AG04449 (cell line): ENCODE measurements at regions of chr11 and their contacts with region 1.

Region 1: GRCh38 chr11:124673333-124674167 is at the starts of genes SIAE and SPA17:
- DNase-seq: peak; percentile 67
- H3K4me3 ChIP-seq: peak within 1 kb of the TSS; percentile 79
- CTCF ChIP-seq: no peak

Region 2: DNA sequence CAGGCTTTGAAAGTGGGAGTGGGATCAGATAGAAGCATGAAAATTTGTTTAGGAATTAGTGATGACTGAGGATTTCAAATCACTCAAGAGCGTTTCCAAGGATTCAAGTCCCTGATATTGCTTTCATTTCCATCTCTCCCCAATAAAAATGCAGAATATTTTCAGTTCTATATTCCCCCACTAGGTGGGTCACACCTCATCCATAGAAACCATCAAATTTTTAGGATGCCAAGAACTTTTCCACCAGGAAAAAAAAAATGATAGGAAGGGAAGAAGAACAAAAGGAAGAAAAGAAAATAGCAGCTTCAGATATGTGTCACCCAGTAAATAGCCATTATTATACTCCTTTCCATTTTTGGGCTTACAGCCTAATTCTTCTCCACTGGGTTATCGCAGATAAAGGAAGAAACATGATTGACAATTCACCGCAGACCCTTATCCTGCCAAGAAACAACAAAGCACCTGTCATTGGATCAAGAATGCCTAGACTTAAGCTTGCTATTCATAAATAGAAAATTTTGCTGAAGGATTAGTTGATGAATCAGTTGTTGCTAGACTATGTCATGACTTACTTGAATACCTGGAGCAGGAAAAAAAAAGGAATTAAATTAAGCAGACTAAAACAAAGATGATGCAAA is 520.7 kb before region 1 on chr11:
- CTCF ChIA-PET with region 1: no interaction called
- POLR2A ChIA-PET with region 1: no interaction called
- DNase-seq: no peak
- H3K4me3 ChIP-seq: no peak overlapping the region
- CTCF ChIP-seq: no peak

Region 3: DNA sequence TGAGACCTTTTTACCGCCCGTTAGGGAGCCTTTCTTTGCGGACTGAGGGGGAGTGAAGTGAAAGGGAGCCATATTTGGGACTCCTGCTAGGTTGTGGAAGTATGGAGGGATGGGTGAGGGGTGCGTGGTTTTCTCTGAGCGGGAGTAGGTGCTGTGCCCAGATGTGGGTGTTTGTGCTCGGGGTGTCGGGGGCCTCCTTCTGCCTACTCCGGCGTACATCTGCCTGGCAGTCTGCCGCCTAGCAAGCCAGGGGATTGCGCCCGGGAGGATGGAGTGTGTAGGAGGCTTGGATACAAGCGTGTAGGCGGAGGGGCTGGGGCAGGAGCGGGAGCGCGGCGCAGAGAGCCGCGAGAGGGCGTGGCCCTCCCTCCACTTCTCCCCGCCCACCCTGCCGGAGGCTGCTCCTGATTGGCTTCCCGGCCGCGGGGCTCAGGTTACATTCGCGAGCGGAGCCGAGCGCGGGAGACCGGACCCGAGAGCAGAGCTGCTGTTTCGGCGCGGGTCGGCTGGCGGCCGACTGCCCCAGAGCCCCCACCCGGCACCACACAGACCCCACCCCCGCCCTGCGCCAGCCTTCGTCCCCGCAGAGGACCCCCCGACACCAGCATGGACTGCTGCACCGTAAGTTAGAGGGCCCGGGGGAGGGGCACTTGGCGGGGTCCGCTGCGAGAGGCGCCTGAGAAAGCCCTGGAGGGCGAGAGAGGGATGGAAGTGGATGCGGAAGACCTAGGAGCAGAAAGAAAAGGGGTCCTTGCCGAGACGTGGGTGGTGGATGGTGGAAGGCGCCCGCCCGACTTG is 66.1 kb after region 1 on chr11 and contains the start of gene NRGN:
- CTCF ChIA-PET with region 1: interaction called, 15 read pairs
- POLR2A ChIA-PET with region 1: no interaction called
- DNase-seq: no peak
- H3K4me3 ChIP-seq: peak within 1 kb of the TSS; percentile 60
- CTCF ChIP-seq: no peak

Region 4: GRCh38 chr11:124758317-124759203 is 85.0 kb after region 1 on chr11:
- CTCF ChIA-PET with region 1: interaction called, 114 read pairs
- POLR2A ChIA-PET with region 1: no interaction called
- DNase-seq: no peak
- H3K4me3 ChIP-seq: peak overlapping the region; percentile 39
- CTCF ChIP-seq: peak; percentile 88

Region 5: GRCh38 chr11:124793466-124794278 is 120.1 kb after region 1 on chr11:
- CTCF ChIA-PET with region 1: interaction called, 58 read pairs
- POLR2A ChIA-PET with region 1: interaction called, 4 read pairs
- DNase-seq: no peak
- H3K4me3 ChIP-seq: no peak overlapping the region
- CTCF ChIP-seq: peak; percentile 56

Region 6: DNA sequence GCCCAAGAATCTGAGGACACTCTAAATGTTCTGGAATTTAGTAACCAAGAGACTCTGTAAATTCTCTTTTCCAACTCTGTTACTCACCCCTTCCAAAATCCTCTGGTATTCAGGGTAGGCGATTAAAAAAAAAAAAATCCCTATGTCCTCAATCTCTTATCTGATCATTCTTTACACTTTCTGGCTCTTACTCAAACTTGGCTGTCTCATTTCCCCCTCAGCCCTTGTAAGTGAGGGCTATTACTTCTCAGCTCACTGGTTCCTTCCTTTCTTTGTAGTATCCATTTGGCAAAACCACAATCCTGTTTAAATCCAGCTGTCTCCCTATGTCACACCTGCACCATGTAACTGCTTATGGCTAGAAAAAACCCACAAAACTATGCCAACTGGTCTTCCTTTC is 139.3 kb after region 1 on chr11:
- CTCF ChIA-PET with region 1: interaction called, 17 read pairs
- POLR2A ChIA-PET with region 1: no interaction called
- DNase-seq: no peak
- H3K4me3 ChIP-seq: no peak overlapping the region
- CTCF ChIP-seq: no peak

Region 7: DNA sequence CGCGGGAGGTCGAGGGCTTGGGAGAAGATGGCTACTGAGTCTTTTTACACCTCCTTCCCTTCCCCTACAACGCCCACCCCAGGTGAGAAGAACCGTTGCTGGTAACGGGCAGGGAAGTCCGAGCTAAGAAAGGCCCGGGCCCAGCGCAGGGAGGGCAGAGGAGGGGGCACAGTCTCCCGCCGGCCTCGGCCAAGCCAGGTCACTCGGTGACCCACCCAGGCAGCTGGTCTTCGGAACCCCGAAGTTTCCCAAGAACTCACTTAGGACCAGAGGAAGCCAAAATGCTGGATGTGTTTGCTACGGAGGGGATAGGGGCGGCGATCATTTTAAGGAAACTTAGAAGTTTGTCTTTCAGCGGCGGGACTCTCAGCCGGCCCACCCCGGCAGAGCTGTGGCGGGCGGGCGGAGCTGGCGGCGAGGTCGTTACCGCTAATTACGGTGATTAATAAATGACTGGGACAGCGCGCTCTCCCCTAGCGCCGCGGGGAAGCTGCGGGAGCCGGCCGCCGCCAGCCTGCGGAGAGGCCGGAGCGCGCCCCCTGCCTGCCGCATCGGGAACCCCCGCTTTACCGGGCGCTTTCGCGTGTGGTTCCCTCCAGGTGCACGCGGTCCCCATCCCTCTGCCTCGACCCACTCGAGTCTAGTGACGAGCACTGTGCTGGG is 192.5 kb after region 1 on chr11:
- CTCF ChIA-PET with region 1: interaction called, 52 read pairs
- POLR2A ChIA-PET with region 1: no interaction called
- DNase-seq: no peak
- H3K4me3 ChIP-seq: peak overlapping the region; percentile 38
- CTCF ChIP-seq: peak; percentile 86